ENCODE measurements at regions of chr11 and their contacts with region 1.

Region 1: GRCh38 chr11:60378354-60378753 is at the start of gene MS4A7:
- DNase-seq: peak; percentile 89
- H3K4me3 ChIP-seq: peak within 1 kb of the TSS; percentile 52
- H3K27ac ChIP-seq: peak within 1 kb of the TSS; percentile 77
- H3K4me1 ChIP-seq: peaks cover 34% of the 10 kb centered on the region
- CTCF ChIP-seq: no peak
- total RNA-seq, gene MS4A7: 0.26 and 0.54 TPM in 2 replicates

Region 2: GRCh38 chr11:60288531-60288930 is 89.8 kb before region 1 on chr11:
- CTCF ChIA-PET with region 1: no interaction called
- POLR2A ChIA-PET with region 1: no interaction called
- intact Hi-C with region 1: no loop called
- DNase-seq: no peak
- H3K4me3 ChIP-seq: no peak overlapping the region
- H3K27ac ChIP-seq: no peak overlapping the region
- H3K4me1 ChIP-seq: no peaks in the 10 kb centered on the region
- CTCF ChIP-seq: no peak

Region 3: GRCh38 chr11:60447846-60448245 is 69.5 kb after region 1 on chr11:
- CTCF ChIA-PET with region 1: no interaction called
- POLR2A ChIA-PET with region 1: interaction called, 3 read pairs
- intact Hi-C with region 1: loop called (anchors 2 kb)
- DNase-seq: no peak
- H3K4me3 ChIP-seq: no peak overlapping the region
- H3K27ac ChIP-seq: no peak overlapping the region
- H3K4me1 ChIP-seq: peaks cover 53% of the 10 kb centered on the region
- CTCF ChIP-seq: no peak

Measured in OCI-LY7 (cell line).